Activated CD4-positive, alpha-beta T cell treated with anti-CD3 and anti-CD28 coated beads, Interleukin-2, amount 10 ng/mL, durations not matched to agents 24 days and 14 days (primary cell): ENCODE measurements at regions of chr13 and their contacts with region 1.

Region 1: DNA sequence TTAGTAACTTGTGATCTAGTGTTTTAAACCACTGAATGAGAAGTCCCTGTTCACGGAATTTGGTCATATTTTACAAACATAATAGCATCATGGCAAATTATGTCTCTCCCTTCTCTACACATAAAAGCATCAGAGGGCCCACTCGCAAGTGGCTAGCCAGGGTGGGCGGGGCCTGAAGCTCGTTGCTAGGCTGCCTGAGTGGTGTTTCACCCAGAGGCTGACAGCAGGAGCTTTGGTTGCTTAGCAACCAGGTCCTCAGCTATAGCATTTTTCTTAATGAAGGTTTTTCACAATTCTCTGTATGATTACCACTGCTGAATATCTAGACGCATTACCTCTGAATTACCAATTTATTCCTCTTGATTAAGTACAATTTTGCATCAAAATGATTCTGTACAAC is 126.5 kb downstream of the NALCN start:
- DNase-seq: no peak
- H3K4me3 Mint-ChIP-seq: no peak overlapping the region
- H3K27ac Mint-ChIP-seq: no peak overlapping the region
- H3K4me1 Mint-ChIP-seq: no peaks in the 10 kb centered on the region
- H3K27me3 Mint-ChIP-seq: no peaks in the 10 kb centered on the region

Region 2: DNA sequence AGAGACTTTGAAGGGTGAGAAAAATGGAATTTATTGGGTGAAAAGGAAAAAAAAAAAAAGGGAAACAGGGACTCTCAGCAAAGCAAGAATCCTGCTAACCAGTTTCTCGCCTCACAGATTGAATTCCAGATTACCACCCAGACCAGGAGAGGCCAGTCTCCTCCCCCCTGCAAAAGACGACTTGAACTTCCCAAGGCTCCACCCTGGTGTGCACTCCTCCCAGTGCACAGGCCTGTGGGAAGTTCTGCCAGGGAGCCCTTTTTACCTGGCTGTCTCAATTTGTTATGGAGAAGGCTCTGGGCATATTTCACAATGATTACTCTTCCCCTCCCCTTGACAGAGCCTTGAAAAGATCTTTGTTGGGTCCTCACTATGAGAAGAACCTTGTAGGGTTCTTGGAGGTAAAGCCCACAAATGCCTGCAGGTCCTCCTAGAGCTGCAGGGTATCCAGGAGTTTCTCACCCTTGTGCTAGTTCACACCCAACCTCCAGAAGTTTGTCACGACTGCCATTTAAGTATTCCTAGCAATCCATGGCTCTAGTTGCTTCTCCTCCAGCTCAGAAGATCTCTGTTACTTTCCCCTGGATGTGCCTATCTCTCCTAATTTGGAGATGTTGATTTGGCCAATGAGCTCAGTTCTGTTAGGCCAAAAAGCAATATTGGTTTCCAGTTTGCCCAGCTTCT is 385.3 kb before region 1 on chr13:
- intact Hi-C with region 1: no loop called
- DNase-seq: no peak
- H3K4me3 Mint-ChIP-seq: no peak overlapping the region
- H3K27ac Mint-ChIP-seq: no peak overlapping the region
- H3K4me1 Mint-ChIP-seq: no peaks in the 10 kb centered on the region
- H3K27me3 Mint-ChIP-seq: peaks cover 10% of the 10 kb centered on the region

Region 3: DNA sequence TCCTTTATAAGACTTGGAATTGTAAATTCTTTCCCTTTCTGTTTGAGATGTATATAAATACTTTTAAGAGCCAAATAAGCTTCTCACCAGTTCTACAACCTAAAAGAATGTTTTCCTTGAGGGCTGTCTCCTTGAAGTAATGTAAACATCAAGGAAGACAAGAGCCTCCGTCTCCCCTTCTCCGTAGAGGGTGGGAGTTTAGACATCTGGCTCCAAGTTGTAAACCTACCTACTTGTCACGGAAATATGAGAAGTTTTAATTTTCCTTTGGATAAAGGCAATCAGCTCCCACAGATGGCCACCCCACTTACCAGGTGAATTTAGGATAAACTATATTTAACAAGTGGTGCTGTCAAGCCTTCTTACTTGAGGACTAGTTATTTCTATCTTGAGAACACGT is 111.4 kb before region 1 on chr13:
- intact Hi-C with region 1: loop called (anchors 10 kb)
- DNase-seq: no peak
- H3K4me3 Mint-ChIP-seq: no peak overlapping the region
- H3K27ac Mint-ChIP-seq: no peak overlapping the region
- H3K4me1 Mint-ChIP-seq: no peaks in the 10 kb centered on the region
- H3K27me3 Mint-ChIP-seq: no peaks in the 10 kb centered on the region

Region 4: GRCh38 chr13:102466610-102467190 is 1176.9 kb after region 1 on chr13:
- intact Hi-C with region 1: no loop called
- DNase-seq: no peak
- H3K4me3 Mint-ChIP-seq: no peak overlapping the region
- H3K27ac Mint-ChIP-seq: no peak overlapping the region
- H3K4me1 Mint-ChIP-seq: no peaks in the 10 kb centered on the region
- H3K27me3 Mint-ChIP-seq: peaks cover 14% of the 10 kb centered on the region